ENCODE measurements at regions of chr9 and their contacts with region 1.

Region 1: GRCh38 chr9:136363606-136364370 is at the start of gene DNLZ:
- DNase-seq: peak; percentile 93
- ATAC-seq: peak; percentile 73
- H3K4me3 Mint-ChIP-seq: peak within 1 kb of the TSS; percentile 79
- H3K27ac Mint-ChIP-seq: peak within 1 kb of the TSS; percentile 80
- H3K4me1 Mint-ChIP-seq: peaks cover 10% of the 10 kb centered on the region
- H3K27me3 Mint-ChIP-seq: no peaks in the 10 kb centered on the region
- total RNA-seq, gene DNLZ: 11.7 to 12.8 TPM

Region 2: GRCh38 chr9:135701959-135702721 is 661.6 kb before region 1 on chr9 and contains the start of gene KCNT1:
- CTCF ChIA-PET with region 1: no interaction called
- POLR2A ChIA-PET with region 1: no interaction called
- intact Hi-C with region 1: no loop called
- DNase-seq: peak; percentile 74
- ATAC-seq: peak; percentile 85
- H3K4me3 Mint-ChIP-seq: no peak within 1 kb of the TSS
- H3K27ac Mint-ChIP-seq: no peak within 1 kb of the TSS
- H3K4me1 Mint-ChIP-seq: no peaks in the 10 kb centered on the region
- H3K27me3 Mint-ChIP-seq: peaks cover 3% of the 10 kb centered on the region
- total RNA-seq, gene KCNT1: not detected

Region 3: DNA sequence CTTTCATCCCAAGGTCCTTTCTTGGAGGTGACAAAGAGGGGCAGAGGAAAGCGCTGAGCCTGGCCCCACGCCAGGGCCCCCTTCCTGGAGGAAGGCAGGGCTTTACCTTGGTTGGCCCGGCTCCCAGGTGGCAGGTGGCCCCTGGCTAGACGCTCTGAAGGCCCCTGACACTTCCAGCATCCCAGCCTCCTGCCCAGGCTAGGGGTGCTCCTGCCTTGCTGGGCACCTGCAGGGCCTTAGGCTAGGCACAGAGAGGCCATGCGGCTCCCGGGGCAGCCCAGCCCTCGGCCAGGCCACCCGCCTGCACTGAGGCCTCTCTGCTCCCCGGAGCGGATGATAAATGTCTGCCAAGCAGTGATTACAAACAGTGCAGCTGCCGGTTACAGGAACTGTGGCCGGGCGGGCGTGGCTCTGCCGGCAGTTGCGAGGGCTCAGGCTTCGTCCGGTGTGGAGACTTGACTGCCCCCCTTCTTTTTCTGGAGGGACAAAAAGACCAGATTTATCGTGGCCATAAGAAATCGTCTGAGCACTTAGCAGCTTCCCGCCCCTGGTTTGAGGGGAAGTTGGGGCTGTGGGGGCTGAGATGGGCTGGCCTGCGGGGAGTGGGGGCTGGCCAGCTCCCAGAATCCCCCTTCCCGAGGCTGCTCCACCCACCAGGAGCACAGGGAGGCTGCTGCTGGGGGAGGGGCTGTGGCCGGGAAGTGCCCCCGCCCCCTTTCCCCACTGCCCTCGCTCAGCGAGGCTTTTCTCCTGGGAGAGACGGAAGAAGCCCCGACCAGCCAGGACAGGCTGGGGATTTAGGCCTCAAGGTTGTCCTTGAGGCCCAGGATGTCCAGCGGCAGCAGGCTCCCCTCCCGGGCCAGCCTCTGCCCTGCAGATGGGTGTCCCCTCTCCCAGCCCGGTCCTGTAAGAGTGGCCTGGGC is 371.0 kb before region 1 on chr9:
- CTCF ChIA-PET with region 1: no interaction called
- POLR2A ChIA-PET with region 1: no interaction called
- intact Hi-C with region 1: loop called in 1 of 2 experiments (anchors 1 kb)
- DNase-seq: peak; percentile 68
- ATAC-seq: peak; percentile 71
- H3K4me3 Mint-ChIP-seq: no peak overlapping the region
- H3K27ac Mint-ChIP-seq: no peak overlapping the region
- H3K4me1 Mint-ChIP-seq: peaks cover 17% of the 10 kb centered on the region
- H3K27me3 Mint-ChIP-seq: no peaks in the 10 kb centered on the region

Region 4: DNA sequence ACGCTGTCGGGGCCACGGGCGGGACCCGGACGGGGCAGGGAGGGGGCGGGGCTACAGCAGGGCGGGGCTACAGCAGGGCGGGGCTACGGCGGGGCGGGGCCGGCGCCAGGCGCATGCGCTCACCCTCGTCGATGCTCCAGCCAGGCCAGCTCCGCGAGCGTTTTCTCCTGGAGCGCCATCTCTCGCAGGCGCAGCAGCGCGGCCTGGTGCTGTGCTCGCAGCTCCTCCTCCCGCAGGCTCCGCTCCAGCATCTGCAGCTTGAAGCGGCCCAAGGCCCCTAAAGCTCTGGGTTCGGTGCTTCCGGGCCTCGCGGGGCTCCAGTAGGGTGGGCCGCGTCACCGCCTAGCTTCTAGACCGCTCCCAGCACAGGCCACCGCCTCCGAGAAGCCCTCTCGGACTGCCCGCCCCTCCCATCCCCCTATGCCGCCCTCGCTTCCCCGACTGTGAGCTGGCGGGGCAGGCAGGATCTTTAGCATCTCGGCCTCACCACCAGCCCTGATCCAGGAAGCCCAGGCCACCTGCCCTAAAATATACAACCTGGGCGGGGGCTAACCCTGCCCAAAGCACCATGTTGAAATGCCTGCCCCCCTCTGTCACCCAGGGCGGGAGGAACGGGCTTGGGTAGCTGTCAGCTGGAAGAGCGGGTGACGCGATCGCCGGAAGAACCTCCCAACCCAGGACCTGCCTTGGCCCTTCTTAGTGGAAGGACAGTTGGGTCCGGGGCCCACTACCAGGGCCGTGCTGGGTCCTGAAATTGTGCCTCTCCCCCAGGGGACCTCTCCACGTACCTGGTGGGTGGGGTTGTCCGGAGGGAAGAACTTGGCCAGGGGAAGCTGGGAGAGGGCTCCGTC is 96.3 kb before region 1 on chr9:
- CTCF ChIA-PET with region 1: interaction called, 5 read pairs
- POLR2A ChIA-PET with region 1: no interaction called
- intact Hi-C with region 1: loop called in 1 of 2 experiments (anchors 1 kb)
- DNase-seq: peak; percentile 92
- ATAC-seq: peak; percentile 99
- H3K4me3 Mint-ChIP-seq: peak overlapping the region; percentile 69
- H3K27ac Mint-ChIP-seq: peak overlapping the region; percentile 58
- H3K4me1 Mint-ChIP-seq: peaks cover 6% of the 10 kb centered on the region
- H3K27me3 Mint-ChIP-seq: no peaks in the 10 kb centered on the region

Region 5: DNA sequence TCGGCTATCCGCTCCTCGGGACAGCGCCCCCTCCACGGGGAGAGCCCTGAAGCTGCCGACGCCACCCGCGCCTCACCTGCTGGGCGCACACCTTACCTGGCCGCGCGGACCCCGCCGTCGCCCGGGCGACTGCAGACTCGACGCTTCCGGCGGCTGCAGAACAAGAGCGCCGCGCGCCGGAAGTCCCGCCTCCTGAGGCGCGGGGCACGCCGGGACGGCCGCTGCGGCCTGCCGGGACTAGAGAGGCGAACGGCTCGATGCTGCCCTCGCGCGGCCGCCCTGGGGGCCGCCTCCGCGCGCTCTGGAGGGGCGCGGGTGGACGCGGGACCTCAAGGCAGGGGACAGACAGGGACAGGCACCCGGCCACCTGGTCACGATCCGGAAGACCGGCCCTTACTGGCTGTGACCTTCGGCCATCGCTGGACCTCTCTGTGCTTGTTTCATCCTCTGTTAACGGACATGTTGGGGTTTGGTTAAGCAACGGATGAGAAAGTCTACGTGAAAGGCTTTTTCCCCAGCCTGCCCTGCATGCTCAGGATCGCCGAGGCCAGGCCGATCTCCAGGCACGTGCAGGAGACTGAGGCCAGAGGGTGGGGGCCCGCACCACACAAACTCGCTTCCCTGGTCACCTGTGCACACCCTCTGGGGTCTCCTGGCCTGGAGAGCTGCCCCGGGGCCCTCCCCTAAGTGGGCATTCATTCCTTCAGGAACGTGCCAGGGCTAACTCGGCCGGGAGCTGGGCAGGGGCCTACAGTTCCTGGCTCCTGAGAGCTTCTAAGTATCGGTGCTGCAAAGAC is 36.4 kb after region 1 on chr9 and contains the start of gene SNAPC4:
- CTCF ChIA-PET with region 1: interaction called, 11 read pairs
- POLR2A ChIA-PET with region 1: interaction called, 4 read pairs
- intact Hi-C with region 1: loop called in 1 of 2 experiments (anchors 1 kb)
- DNase-seq: peak; percentile 93
- ATAC-seq: peak; percentile 68
- H3K4me3 Mint-ChIP-seq: peak within 1 kb of the TSS; percentile 86
- H3K27ac Mint-ChIP-seq: peak within 1 kb of the TSS; percentile 80
- H3K4me1 Mint-ChIP-seq: peaks cover 50% of the 10 kb centered on the region
- H3K27me3 Mint-ChIP-seq: no peaks in the 10 kb centered on the region
- total RNA-seq, gene SNAPC4: 12.4 to 16.8 TPM

Region 6: DNA sequence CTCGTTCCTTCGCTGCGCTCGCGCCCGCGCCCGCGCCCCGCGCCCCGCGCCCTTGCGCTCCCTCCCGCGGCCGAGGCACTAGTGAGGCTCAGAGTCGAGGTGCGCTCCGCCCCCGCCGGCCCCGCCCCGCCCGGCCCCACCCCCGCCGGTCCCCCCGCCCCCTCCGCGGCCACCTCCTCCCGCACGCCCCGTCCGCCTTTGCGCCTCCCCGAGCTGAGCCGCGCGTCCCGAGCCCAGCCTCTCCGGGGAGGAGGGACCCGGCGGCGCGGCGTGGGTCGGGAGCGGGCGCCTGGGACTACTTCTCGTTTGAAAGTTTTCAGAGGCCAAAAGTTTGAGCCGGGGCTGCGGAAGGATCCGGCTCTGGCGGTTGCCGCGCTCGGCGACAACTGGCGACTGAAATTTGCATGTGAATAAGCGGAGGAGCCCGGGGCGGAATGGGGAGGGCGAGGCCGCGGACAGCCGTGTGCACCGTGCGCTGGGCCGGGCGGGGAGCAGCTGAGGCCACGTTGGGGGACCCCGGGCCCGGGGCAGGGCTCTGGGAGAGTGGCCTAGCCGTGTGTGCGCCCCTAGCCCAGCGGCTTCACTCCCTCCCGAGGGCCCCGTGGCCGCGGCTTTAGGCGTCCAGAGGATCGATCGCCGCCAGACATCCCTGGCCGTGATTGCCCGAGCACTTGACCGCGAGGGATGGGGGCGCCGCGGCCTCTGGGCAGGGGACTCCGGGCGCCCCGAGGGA is 182.3 kb after region 1 on chr9 and contains the start of gene NOTCH1:
- CTCF ChIA-PET with region 1: no interaction called
- POLR2A ChIA-PET with region 1: no interaction called
- intact Hi-C with region 1: loop called in 1 of 2 experiments (anchors 1 kb)
- DNase-seq: peak; percentile 95
- ATAC-seq: peak; percentile 75
- H3K4me3 Mint-ChIP-seq: peak within 1 kb of the TSS; percentile 92
- H3K27ac Mint-ChIP-seq: peak within 1 kb of the TSS; percentile 88
- H3K4me1 Mint-ChIP-seq: peaks cover 34% of the 10 kb centered on the region
- H3K27me3 Mint-ChIP-seq: no peaks in the 10 kb centered on the region
- total RNA-seq, gene NOTCH1: 70.0 to 79.4 TPM

Region 7: GRCh38 chr9:136991993-136992818 is 628.4 kb after region 1 on chr9 and contains the start of gene PAXX:
- CTCF ChIA-PET with region 1: no interaction called
- POLR2A ChIA-PET with region 1: no interaction called
- intact Hi-C with region 1: loop called in 1 of 2 experiments (anchors 1 kb)
- DNase-seq: peak; percentile 98
- ATAC-seq: peak; percentile 95
- H3K4me3 Mint-ChIP-seq: peak within 1 kb of the TSS; percentile 81
- H3K27ac Mint-ChIP-seq: peak within 1 kb of the TSS; percentile 70
- H3K4me1 Mint-ChIP-seq: peaks cover 22% of the 10 kb centered on the region
- H3K27me3 Mint-ChIP-seq: peaks cover 4% of the 10 kb centered on the region
- total RNA-seq, gene PAXX: 52.7 to 67.1 TPM